ENCODE measurements at regions of chr6 and their contacts with region 1.

Region 1: DNA sequence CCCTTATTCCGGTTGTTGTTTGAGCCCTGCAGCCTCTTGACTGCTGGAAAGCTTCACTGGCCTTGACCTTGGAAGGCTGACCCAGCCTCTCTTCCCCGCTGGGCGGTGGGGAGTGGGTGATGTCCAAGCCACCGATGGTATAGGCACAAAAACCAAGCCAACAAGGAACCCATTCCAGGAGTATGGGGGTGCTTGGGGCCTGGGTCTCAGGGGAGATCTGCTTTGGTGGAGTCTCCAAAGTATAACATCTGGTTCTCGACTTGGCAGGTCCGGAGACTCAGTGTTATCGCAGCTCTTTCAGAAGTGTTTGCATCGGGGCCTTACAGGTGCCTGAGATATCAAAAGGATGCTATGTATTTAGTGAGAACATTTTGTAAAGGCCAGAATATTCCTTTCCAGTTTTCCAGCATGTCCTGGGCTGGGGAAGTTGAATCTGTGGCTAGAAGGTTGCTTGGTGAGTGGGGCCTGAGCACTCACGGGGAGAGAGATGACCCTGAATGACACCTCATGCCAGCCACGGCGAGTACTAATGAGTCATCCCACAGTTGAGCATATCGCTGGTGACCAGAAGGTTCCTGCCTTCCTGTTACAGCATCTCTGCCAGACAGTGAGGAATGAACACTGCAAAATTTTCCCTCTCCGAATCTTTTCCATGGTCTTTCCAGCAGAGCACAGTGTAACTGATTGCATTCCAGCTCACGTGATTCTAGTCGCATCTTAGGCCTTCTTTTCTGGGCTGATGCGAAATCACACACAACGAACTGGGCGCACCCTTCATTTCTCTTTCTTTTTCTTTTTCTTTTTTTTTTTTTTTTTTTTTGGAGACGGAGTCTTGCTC is 133.9 kb downstream of the ZDHHC14 start:
- DNase-seq: peak; percentile 99
- H3K4me3 ChIP-seq: no peak overlapping the region
- H3K27ac ChIP-seq: peak overlapping the region; percentile 88
- H3K4me1 ChIP-seq: peaks cover 29% of the 10 kb centered on the region
- H3K27me3 ChIP-seq: no peaks in the 10 kb centered on the region
- CTCF ChIP-seq: no peak
- POLR2A ChIP-seq: peak; percentile 86

Region 2: DNA sequence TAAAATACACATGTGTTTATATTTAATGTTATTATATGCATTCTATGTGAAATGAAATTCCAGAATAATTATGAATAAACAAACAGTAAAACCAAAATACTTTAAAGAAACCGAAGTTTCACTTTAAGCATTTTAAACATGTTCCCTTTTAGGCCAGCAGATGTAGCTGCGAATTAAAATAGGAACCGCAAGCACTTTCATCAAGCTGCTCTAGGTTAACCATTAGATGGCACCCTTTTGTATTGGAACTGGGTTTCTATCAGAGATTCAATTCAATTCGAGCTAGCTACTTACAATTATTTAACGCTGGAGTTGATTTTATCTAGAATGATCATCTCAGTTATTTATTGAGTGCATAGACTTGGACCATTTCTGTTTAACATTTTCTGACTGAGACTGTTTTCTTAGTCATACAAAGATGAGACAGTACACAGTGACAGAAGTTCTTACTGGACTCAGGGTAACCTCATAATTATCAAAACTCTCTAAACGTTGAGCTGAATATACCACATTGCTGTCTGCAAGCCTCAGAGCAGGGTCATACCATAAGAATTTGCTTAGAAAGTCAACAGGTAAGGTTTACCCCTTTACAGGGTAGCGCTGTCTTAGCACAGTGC is 200.1 kb before region 1 on chr6:
- CTCF ChIA-PET with region 1: no interaction called
- POLR2A ChIA-PET with region 1: no interaction called
- dilution Hi-C with region 1: no loop called
- intact Hi-C with region 1: loop called (anchors 1 kb)
- DNase-seq: peak; percentile 79
- H3K4me3 ChIP-seq: no peak overlapping the region
- H3K27ac ChIP-seq: no peak overlapping the region
- H3K4me1 ChIP-seq: peaks cover 20% of the 10 kb centered on the region
- H3K27me3 ChIP-seq: no peaks in the 10 kb centered on the region
- CTCF ChIP-seq: peak; percentile 59 to 68
- POLR2A ChIP-seq: no peak

Region 3: GRCh38 chr6:157379656-157380454 is 135.0 kb before region 1 on chr6:
- CTCF ChIA-PET with region 1: no interaction called
- POLR2A ChIA-PET with region 1: no interaction called
- dilution Hi-C with region 1: no loop called
- intact Hi-C with region 1: loop called (anchors 1 kb)
- DNase-seq: peak; percentile 91
- H3K4me3 ChIP-seq: peak overlapping the region; percentile 61 to 97 (median 74)
- H3K27ac ChIP-seq: peak overlapping the region; percentile 60
- H3K4me1 ChIP-seq: peaks cover 18% of the 10 kb centered on the region
- H3K27me3 ChIP-seq: no peaks in the 10 kb centered on the region
- CTCF ChIP-seq: no peak
- POLR2A ChIP-seq: no peak

Region 4: DNA sequence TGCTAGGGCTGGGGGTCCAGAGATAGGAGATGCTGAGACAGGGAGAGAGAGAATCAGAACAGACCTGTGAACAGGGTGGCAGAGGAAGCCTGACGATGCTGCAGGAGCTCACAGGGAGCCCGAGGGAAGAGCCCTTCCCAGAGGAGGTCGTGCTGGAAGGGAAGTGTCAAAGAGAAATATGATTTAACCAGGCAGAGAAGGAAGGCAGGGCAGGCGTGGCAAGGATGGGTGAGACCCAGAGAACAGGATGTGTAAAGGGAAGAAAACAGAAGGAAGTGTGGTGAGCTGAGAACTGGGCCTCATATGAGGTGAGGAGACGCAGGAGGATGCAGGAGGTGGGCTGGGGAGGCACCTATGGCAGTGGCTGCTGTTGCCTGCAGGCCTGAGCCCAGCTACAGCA is 28.3 kb before region 1 on chr6:
- CTCF ChIA-PET with region 1: no interaction called
- POLR2A ChIA-PET with region 1: no interaction called
- dilution Hi-C with region 1: no loop called
- intact Hi-C with region 1: no loop called
- DNase-seq: no peak
- H3K4me3 ChIP-seq: no peak overlapping the region
- H3K27ac ChIP-seq: no peak overlapping the region
- H3K4me1 ChIP-seq: no peaks in the 10 kb centered on the region
- H3K27me3 ChIP-seq: no peaks in the 10 kb centered on the region
- CTCF ChIP-seq: no peak
- POLR2A ChIP-seq: no peak

Region 5: DNA sequence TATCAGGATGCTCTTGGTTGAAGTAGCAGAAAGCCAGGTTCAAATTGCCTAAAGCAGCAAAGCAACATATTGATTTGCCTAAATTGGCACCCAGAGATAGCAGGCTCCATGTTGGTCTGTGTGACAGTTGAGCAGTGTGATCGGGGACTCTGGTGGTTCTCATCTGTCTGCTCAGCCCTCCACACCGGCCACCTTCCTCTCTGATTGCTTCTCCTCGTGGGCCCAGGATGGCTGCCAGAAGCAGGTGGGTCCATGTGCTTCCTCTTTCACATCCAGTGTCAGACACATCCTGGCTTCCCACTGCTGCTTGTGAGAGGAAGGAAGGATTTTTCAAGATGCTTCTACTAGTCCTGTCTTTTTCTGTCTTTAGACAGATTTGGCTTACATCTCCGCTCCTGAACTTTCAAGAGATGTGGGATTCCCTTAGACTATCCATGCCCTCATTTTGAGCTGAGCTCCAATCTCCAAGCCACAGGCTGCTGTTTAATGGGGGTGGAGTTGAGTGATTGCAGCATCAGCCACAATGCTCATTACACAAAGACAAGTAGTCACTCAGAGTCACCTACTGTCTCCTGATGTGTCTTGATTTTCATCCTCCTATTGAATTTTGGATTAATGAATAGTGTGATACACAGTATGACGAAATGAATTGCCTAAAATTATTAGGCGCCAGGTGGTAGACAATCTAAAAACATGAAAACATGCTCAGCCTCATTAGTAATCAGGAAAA is 11.7 kb before region 1 on chr6:
- CTCF ChIA-PET with region 1: interaction called, 4 read pairs
- POLR2A ChIA-PET with region 1: no interaction called
- dilution Hi-C with region 1: no loop called
- intact Hi-C with region 1: loop called (anchors 1 kb)
- DNase-seq: no peak
- H3K4me3 ChIP-seq: no peak overlapping the region
- H3K27ac ChIP-seq: no peak overlapping the region
- H3K4me1 ChIP-seq: peaks cover 23% of the 10 kb centered on the region
- H3K27me3 ChIP-seq: no peaks in the 10 kb centered on the region
- CTCF ChIP-seq: no peak
- POLR2A ChIP-seq: no peak

Region 6: GRCh38 chr6:157535339-157536222 is 20.7 kb after region 1 on chr6:
- CTCF ChIA-PET with region 1: interaction called, 4 read pairs
- POLR2A ChIA-PET with region 1: no interaction called
- dilution Hi-C with region 1: no loop called
- intact Hi-C with region 1: loop called (anchors 1 kb)
- DNase-seq: peak; percentile 96
- H3K4me3 ChIP-seq: peak overlapping the region in 1 of 3 experiments; percentile 34
- H3K27ac ChIP-seq: peak overlapping the region; percentile 94
- H3K4me1 ChIP-seq: peaks cover 42% of the 10 kb centered on the region
- H3K27me3 ChIP-seq: no peaks in the 10 kb centered on the region
- CTCF ChIP-seq: no peak
- POLR2A ChIP-seq: no peak

Region 7: GRCh38 chr6:157563611-157564284 is 48.9 kb after region 1 on chr6:
- CTCF ChIA-PET with region 1: no interaction called
- POLR2A ChIA-PET with region 1: no interaction called
- dilution Hi-C with region 1: no loop called
- intact Hi-C with region 1: no loop called
- DNase-seq: no peak
- H3K4me3 ChIP-seq: no peak overlapping the region
- H3K27ac ChIP-seq: no peak overlapping the region
- H3K4me1 ChIP-seq: no peaks in the 10 kb centered on the region
- H3K27me3 ChIP-seq: no peaks in the 10 kb centered on the region
- CTCF ChIP-seq: no peak
- POLR2A ChIP-seq: no peak

Region 8: DNA sequence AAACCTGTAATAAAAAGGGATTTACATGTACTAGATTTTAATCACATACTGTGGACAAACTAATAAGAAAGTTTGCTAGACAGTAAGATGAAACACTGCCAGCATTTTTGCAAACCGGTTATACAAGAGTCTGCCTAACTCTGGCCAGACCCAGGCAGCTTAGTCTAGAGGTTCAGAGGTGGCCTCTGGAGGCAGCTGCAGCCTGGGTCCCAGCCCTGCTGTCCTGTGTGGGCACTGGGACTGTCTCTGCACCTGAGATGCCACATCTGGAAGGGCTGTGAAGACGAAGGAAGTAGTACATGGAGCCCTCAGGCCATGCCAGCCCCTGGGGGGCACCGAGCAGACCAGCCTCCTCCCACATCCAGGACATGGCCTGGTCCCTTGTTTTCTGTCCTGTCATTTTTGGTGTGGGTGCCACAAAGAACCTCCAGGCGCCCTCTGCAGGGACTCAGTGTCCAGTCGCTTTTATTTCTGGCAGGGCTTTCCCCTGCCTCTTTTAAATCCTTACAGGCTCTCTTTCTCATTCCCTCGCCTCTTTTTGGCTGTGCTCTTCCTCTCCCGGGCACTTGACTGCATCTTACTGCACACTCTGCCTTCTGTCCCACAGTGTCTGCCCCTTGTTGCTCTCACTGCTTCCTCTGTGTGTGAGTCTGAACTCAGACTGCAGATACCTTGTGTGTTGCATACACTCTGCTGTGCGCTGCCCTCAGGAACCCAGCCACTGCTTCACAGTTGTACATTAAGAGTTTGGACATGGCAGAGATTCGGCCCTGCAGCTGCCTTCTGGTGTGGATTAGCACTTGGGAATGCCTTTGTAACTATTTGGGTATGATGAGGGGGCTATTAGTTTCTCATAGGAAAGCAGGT is 82.8 kb after region 1 on chr6:
- CTCF ChIA-PET with region 1: interaction called, 3 read pairs
- POLR2A ChIA-PET with region 1: no interaction called
- dilution Hi-C with region 1: no loop called
- intact Hi-C with region 1: loop called (anchors 1 kb)
- DNase-seq: peak; percentile 57
- H3K4me3 ChIP-seq: no peak overlapping the region
- H3K27ac ChIP-seq: no peak overlapping the region
- H3K4me1 ChIP-seq: no peaks in the 10 kb centered on the region
- H3K27me3 ChIP-seq: no peaks in the 10 kb centered on the region
- CTCF ChIP-seq: peak; percentile 50 to 68
- POLR2A ChIP-seq: no peak

Region 9: GRCh38 chr6:158072083-158072721 is 557.3 kb after region 1 on chr6:
- CTCF ChIA-PET with region 1: no interaction called
- POLR2A ChIA-PET with region 1: no interaction called
- dilution Hi-C with region 1: no loop called
- intact Hi-C with region 1: no loop called
- DNase-seq: peak; percentile 76
- H3K4me3 ChIP-seq: no peak overlapping the region
- H3K27ac ChIP-seq: peak overlapping the region; percentile 34
- H3K4me1 ChIP-seq: peaks cover 38% of the 10 kb centered on the region
- H3K27me3 ChIP-seq: no peaks in the 10 kb centered on the region
- CTCF ChIP-seq: peak; percentile 76 to 86
- POLR2A ChIP-seq: no peak

Region 10: GRCh38 chr6:158284007-158284875 is 769.4 kb after region 1 on chr6:
- CTCF ChIA-PET with region 1: no interaction called
- POLR2A ChIA-PET with region 1: no interaction called
- dilution Hi-C with region 1: no loop called
- intact Hi-C with region 1: no loop called
- DNase-seq: no peak
- H3K4me3 ChIP-seq: no peak overlapping the region
- H3K27ac ChIP-seq: no peak overlapping the region
- H3K4me1 ChIP-seq: peaks cover 18% of the 10 kb centered on the region
- H3K27me3 ChIP-seq: no peaks in the 10 kb centered on the region
- CTCF ChIP-seq: no peak
- POLR2A ChIP-seq: no peak

Measured in endothelial cell of umbilical vein (primary cell).